ENCODE measurements at regions of chr1 and their contacts with region 1.

Region 1: DNA sequence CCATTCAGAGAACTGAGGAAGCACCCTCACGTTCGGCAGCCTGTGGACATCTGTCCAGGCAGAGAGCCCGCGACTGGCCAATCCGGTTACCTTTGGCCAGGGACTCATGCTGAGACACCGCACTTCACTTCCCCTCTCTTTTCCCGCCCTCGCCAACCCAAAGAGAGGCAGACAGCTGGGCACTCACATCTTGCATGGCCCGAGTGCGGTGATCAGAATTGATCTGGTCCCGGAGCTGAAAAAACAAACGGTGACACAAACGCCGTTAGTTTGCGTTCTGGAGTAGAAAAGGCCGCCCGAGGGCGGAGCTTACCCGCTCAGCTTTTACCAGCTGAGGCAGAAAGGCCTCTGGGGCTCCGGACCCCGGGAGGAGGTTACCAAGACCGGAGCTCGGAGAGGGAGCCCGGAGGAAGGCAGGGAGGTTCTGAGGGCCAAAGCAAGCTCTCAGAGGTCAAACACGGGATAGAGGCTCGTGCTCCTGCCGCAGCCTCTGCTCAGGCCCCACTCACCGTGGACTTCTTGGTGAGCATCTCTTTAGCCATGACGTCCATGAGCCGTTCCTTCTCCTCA is 376 bp downstream of the SF3A3 start:
- DNase-seq: peak; percentile 47
- H3K4me3 ChIP-seq: peak overlapping the region; percentile 79 to 90
- H3K27ac ChIP-seq: peak overlapping the region; percentile 68 to 71
- H3K4me1 ChIP-seq: no peaks in the 10 kb centered on the region; a peak in 1 of 4 replicates
- H3K27me3 ChIP-seq: no peaks in the 10 kb centered on the region
- CTCF ChIP-seq: no peak
- EP300 ChIP-seq: no peak
- RAD21 ChIP-seq: no peak

Region 2: GRCh38 chr1:37999430-38000232 is 10.2 kb after region 1 on chr1:
- CTCF ChIA-PET with region 1: interaction called, 37 read pairs
- POLR2A ChIA-PET with region 1: interaction called, 3 read pairs
- DNase-seq: peak; percentile 72
- H3K4me3 ChIP-seq: no peak overlapping the region; a peak in 1 of 4 replicates
- H3K27ac ChIP-seq: peak overlapping the region; percentile 88 to 92
- H3K4me1 ChIP-seq: peaks cover 48 to 52% of the 10 kb centered on the region in 2 experiments
- H3K27me3 ChIP-seq: no peaks in the 10 kb centered on the region
- CTCF ChIP-seq: no peak
- EP300 ChIP-seq: no peak
- RAD21 ChIP-seq: no peak

Region 3: DNA sequence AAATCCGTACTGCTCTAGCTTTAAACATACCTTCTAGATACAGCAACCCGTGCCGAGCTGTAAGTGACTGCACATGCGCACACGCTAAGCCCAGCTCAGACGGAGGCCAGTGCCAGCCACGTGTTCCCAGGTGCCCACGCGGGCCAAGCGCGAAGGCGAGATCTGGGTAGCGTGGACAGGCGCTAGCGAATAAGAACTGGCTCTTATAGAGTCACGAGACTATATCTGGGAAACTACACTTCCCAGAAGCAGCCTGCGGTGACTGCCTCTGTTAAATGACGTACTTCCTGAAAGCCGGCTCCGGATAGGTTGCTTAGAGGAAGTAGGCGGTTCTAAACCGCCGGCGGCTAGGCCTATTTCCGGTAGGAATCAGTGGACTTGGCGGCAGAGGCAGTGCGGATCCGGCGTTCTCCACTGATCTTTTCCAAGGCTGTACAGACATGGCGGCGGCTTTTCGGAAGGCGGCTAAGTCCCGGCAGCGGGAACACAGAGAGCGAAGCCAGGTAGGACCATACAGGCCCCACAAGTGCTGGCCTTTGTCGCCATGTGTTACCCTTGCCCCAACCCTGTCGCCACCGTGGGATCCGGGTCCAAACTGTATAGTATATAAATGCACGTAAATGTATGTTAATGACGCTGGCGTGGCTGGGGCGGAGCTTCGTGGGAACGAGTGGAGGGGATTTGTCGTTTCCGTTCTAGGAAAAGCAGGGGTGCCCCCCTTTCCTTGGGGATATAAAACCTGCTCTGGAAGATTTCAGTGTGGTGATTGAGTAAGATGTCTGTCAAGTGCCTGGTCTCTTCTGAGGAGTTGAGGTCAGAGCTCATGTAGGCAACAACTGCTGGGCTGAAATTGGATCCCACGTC is 23.1 kb after region 1 on chr1 and contains the start of gene UTP11:
- CTCF ChIA-PET with region 1: interaction called, 9 read pairs
- POLR2A ChIA-PET with region 1: interaction called, 15 read pairs
- DNase-seq: peak; percentile 87
- H3K4me3 ChIP-seq: peak within 1 kb of the TSS; percentile 80 to 81
- H3K27ac ChIP-seq: peak within 1 kb of the TSS; percentile 95 to 96
- H3K4me1 ChIP-seq: peaks cover 3 to 20% of the 10 kb centered on the region in 2 experiments; a peak in 2 of 4 replicates
- H3K27me3 ChIP-seq: no peaks in the 10 kb centered on the region
- CTCF ChIP-seq: no peak
- EP300 ChIP-seq: peak in 1 of 2 experiments; percentile 19; a peak in 1 of 4 replicates
- RAD21 ChIP-seq: no peak
- polyA plus RNA-seq, gene UTP11: 26.8 and 27.3 TPM in 2 replicates

Region 4: GRCh38 chr1:38018864-38019343 is 29.5 kb after region 1 on chr1:
- CTCF ChIA-PET with region 1: interaction called, 32 read pairs
- POLR2A ChIA-PET with region 1: no interaction called
- DNase-seq: no peak
- H3K4me3 ChIP-seq: no peak overlapping the region
- H3K27ac ChIP-seq: no peak overlapping the region
- H3K4me1 ChIP-seq: peaks cover 3 to 21% of the 10 kb centered on the region in 2 experiments; a peak in 2 of 4 replicates
- H3K27me3 ChIP-seq: no peaks in the 10 kb centered on the region
- CTCF ChIP-seq: peak; percentile 77
- EP300 ChIP-seq: no peak
- RAD21 ChIP-seq: peak; percentile 69

Region 5: GRCh38 chr1:38071312-38072256 is 82.1 kb after region 1 on chr1:
- CTCF ChIA-PET with region 1: no interaction called
- POLR2A ChIA-PET with region 1: no interaction called
- DNase-seq: peak; percentile 56
- H3K4me3 ChIP-seq: no peak overlapping the region
- H3K27ac ChIP-seq: no peak overlapping the region
- H3K4me1 ChIP-seq: peaks cover 4 to 7% of the 10 kb centered on the region in 2 experiments; a peak in 2 of 4 replicates
- H3K27me3 ChIP-seq: peaks cover 68% of the 10 kb centered on the region
- CTCF ChIP-seq: peak; percentile 43
- EP300 ChIP-seq: no peak
- RAD21 ChIP-seq: peak; percentile 53

Measured in SK-N-SH (cell line).